A549 (cell line): ENCODE measurements at regions of chr2 and their contacts with region 1.

Region 1: GRCh38 chr2:45993476-45993991 is 303.7 kb upstream of the EPAS1 start:
- DNase-seq: peak; percentile 77 to 94
- ATAC-seq: peak; percentile 50 to 67; a peak in 5 of 6 replicates
- H3K4me3 ChIP-seq: no peak overlapping the region
- H3K27ac ChIP-seq: peak overlapping the region; percentile 84 to 89
- H3K4me1 ChIP-seq: peaks cover 31% of the 10 kb centered on the region
- CTCF ChIP-seq: peak; percentile 97
- EP300 ChIP-seq: no peak
- POLR2A ChIP-seq: no peak
- RAD21 ChIP-seq: peak; percentile 96 to 98

Region 2: GRCh38 chr2:45637440-45637839 is 356.1 kb before region 1 on chr2:
- CTCF ChIA-PET with region 1: interaction called, 16 read pairs
- POLR2A ChIA-PET with region 1: no interaction called
- DNase-seq: no peak
- ATAC-seq: no peak
- H3K4me3 ChIP-seq: no peak overlapping the region
- H3K27ac ChIP-seq: no peak overlapping the region
- H3K4me1 ChIP-seq: no peaks in the 10 kb centered on the region
- CTCF ChIP-seq: no peak
- EP300 ChIP-seq: no peak
- POLR2A ChIP-seq: no peak
- RAD21 ChIP-seq: no peak

Region 3: GRCh38 chr2:45813003-45813941 is 180.3 kb before region 1 on chr2:
- CTCF ChIA-PET with region 1: no interaction called
- POLR2A ChIA-PET with region 1: no interaction called
- DNase-seq: no peak
- ATAC-seq: no peak
- H3K4me3 ChIP-seq: no peak overlapping the region
- H3K27ac ChIP-seq: no peak overlapping the region; a peak in 1 of 6 replicates
- H3K4me1 ChIP-seq: peaks cover 19% of the 10 kb centered on the region
- CTCF ChIP-seq: no peak
- EP300 ChIP-seq: no peak
- POLR2A ChIP-seq: no peak
- RAD21 ChIP-seq: no peak

Region 4: DNA sequence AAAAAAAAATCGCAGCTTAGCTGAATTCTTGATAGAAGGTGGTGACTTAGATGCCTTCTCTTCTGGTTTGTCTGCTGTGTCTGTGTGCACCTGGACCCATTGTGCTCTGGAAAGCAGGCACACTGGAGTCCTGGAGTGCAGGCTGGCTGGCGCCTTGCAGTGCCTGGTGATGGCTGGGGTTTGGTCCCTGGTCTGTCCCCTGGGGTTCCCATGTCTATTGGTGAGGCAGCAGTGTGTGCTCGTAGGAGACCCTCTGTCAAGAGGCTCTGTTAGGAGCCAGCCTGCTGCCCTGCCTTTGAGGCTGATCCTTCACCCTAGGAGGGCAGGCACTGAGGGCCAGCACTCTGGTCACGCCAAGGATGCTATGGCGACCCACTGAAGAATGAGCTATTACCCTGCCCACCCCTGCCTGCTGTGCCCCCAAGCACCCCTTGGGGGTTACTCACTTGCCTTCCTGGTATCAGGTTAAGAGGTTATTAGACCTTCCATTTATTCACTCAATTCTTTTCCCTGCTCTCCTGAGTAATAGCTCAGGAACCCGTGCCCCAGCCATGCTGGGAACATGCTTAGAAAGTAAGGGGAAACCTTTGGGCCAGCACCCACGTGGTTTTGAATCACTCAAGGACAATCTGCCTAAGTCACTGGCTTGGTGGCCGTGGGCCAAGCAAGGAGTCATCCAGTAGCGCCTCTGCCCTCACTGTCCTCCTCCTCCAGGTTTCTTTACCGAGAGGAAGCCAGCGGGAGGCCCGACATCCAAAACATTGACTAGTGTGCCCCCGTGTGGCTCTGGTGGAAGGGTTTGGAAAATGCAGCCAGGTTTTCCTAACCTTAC is 57.5 kb before region 1 on chr2:
- CTCF ChIA-PET with region 1: interaction called, 18 read pairs
- POLR2A ChIA-PET with region 1: interaction called, 7 read pairs
- DNase-seq: peak; percentile 95 to 98
- ATAC-seq: peak; percentile 75
- H3K4me3 ChIP-seq: no peak overlapping the region
- H3K27ac ChIP-seq: peak overlapping the region; percentile 89 to 90
- H3K4me1 ChIP-seq: peaks cover 44% of the 10 kb centered on the region
- CTCF ChIP-seq: peak; percentile 97
- EP300 ChIP-seq: peak in 1 of 2 experiments; percentile 59; a peak in 1 of 5 replicates
- POLR2A ChIP-seq: no peak
- RAD21 ChIP-seq: peak; percentile 98

Region 5: GRCh38 chr2:45979065-45979464 is 14.5 kb before region 1 on chr2:
- CTCF ChIA-PET with region 1: interaction called, 28 read pairs
- POLR2A ChIA-PET with region 1: no interaction called
- DNase-seq: no peak
- ATAC-seq: no peak
- H3K4me3 ChIP-seq: no peak overlapping the region
- H3K27ac ChIP-seq: no peak overlapping the region
- H3K4me1 ChIP-seq: no peaks in the 10 kb centered on the region
- CTCF ChIP-seq: no peak
- EP300 ChIP-seq: no peak
- POLR2A ChIP-seq: no peak
- RAD21 ChIP-seq: no peak

Region 6: DNA sequence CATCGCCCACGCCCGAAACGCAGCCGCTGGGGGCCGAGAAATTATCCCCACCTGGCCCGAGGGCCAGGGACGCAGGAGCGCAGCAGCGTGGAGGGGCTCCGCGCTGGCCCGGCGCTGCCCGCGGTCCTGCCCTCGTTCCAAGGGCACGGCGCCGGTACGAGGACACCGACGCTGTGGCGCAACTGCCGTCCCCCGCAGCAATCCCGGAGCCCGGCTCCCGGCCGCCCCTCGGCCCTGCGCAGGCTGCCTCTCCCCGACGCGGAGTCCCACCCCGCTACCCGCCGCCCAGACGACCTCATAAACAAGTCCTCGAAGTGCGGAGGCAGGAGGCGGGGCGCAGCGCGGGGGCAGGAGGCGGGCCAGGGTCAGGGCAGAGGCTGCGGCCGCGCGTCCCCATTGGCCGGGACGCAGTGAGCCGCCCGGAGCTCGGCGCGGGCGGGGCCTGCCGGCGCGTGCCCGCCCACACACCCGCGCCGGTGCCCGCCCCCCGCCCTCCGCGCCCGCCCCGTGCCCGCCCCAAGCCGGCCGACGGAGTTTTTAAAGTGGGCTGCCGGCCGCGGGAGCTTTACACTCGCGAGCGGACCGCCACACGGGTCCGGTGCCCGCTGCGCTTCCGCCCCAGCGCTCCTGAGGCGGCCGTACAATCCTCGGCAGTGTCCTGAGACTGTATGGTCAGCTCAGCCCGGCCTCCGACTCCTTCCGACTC is 303.5 kb after region 1 on chr2 and contains the start of gene EPAS1:
- CTCF ChIA-PET with region 1: interaction called, 11 read pairs
- POLR2A ChIA-PET with region 1: interaction called, 10 read pairs
- DNase-seq: peak; percentile 89 to 96
- ATAC-seq: peak; percentile 74 to 79
- H3K4me3 ChIP-seq: peak within 1 kb of the TSS; percentile 92
- H3K27ac ChIP-seq: peak within 1 kb of the TSS; percentile 81 to 91
- H3K4me1 ChIP-seq: peaks cover 41% of the 10 kb centered on the region
- CTCF ChIP-seq: no peak
- EP300 ChIP-seq: no peak
- POLR2A ChIP-seq: peak; percentile 94
- RAD21 ChIP-seq: no peak; a peak in 1 of 5 replicates
- polyA plus RNA-seq, gene EPAS1: 143 and 150 TPM in 2 replicates

Region 7: GRCh38 chr2:46364797-46365457 is 371.4 kb after region 1 on chr2:
- CTCF ChIA-PET with region 1: interaction called, 44 read pairs
- POLR2A ChIA-PET with region 1: no interaction called
- DNase-seq: peak; percentile 50 to 71
- ATAC-seq: peak in 1 of 2 experiments; percentile 70; a peak in 3 of 6 replicates
- H3K4me3 ChIP-seq: no peak overlapping the region
- H3K27ac ChIP-seq: peak overlapping the region in 1 of 2 experiments; percentile 60; a peak in 2 of 6 replicates
- H3K4me1 ChIP-seq: peaks cover 27% of the 10 kb centered on the region
- CTCF ChIP-seq: peak; percentile 94
- EP300 ChIP-seq: no peak
- POLR2A ChIP-seq: no peak
- RAD21 ChIP-seq: peak; percentile 94 to 96

Region 8: GRCh38 chr2:46470114-46470628 is 476.6 kb after region 1 on chr2:
- CTCF ChIA-PET with region 1: interaction called, 18 read pairs
- POLR2A ChIA-PET with region 1: no interaction called
- DNase-seq: no peak
- ATAC-seq: peak in 1 of 2 experiments; percentile 37; a peak in 1 of 6 replicates
- H3K4me3 ChIP-seq: no peak overlapping the region
- H3K27ac ChIP-seq: no peak overlapping the region
- H3K4me1 ChIP-seq: no peaks in the 10 kb centered on the region
- CTCF ChIP-seq: no peak
- EP300 ChIP-seq: no peak
- POLR2A ChIP-seq: no peak
- RAD21 ChIP-seq: no peak